ENCODE measurements at regions of chr2 and their contacts with region 1.

Region 1: DNA sequence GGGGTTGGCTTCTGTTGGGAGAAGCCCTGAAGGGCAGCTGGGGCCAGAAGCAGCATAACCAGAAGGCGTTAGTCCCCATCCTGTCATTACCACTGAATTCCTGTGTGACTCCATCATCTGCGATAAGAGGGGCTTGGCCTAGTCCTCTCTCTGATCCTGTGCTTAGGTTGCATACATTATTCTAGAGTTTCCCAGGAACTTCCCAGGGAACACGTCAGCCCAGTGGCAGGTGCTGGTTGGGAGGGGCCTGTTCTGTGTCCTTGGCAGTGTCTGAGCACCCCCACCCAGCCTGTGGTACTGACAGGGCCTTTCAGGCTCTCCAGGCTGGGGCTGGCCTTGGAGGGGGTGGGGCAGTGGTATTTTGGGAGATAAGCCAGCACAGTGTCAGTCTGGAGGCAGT is 4.5 kb upstream of the TOGARAM2 start:
- DNase-seq: no peak
- ATAC-seq: no peak

Region 2: GRCh38 chr2:29841386-29842004 is 864.9 kb after region 1 on chr2:
- intact Hi-C with region 1: loop called in 1 of 2 experiments (anchors 10 kb)
- DNase-seq: peak in 1 of 2 donors; percentile 6
- ATAC-seq: no peak